Mammary epithelial cell (primary cell): ENCODE measurements at regions of chr16 and their contacts with region 1.

Region 1: DNA sequence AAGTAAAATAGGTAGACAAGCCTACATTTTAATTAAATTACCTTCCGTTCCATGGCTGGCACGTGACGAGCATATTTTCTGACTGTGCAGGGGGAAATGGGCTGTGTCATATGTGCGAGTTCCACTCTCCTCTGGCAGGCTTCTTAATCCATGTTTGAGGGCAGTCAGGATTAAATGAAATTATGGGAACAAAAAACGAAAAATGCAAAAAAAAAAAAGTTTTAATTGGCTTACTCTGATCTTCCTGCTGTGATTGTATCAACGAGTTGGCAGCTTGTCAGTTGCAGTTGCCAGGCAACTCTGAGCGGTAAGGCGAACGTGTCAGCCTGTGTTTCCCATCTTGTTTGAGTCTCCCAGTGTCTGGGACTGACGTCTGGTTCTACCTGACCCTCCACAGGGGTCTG is 302.9 kb upstream of the XYLT1 start:
- DNase-seq: no peak
- H3K4me3 ChIP-seq: no peak overlapping the region
- H3K27ac ChIP-seq: no peak overlapping the region
- H3K4me1 ChIP-seq: no peaks in the 10 kb centered on the region
- H3K27me3 ChIP-seq: no peaks in the 10 kb centered on the region
- CTCF ChIP-seq: no peak

Region 2: GRCh38 chr16:17744903-17745575 is 28.7 kb before region 1 on chr16:
- CTCF ChIA-PET with region 1: interaction called, 46 read pairs
- dilution Hi-C with region 1: no loop called
- in situ Hi-C with region 1: no loop called
- intact Hi-C with region 1: no loop called
- DNase-seq: no peak
- H3K4me3 ChIP-seq: no peak overlapping the region
- H3K27ac ChIP-seq: no peak overlapping the region
- H3K4me1 ChIP-seq: no peaks in the 10 kb centered on the region
- H3K27me3 ChIP-seq: no peaks in the 10 kb centered on the region
- CTCF ChIP-seq: no peak

Region 3: DNA sequence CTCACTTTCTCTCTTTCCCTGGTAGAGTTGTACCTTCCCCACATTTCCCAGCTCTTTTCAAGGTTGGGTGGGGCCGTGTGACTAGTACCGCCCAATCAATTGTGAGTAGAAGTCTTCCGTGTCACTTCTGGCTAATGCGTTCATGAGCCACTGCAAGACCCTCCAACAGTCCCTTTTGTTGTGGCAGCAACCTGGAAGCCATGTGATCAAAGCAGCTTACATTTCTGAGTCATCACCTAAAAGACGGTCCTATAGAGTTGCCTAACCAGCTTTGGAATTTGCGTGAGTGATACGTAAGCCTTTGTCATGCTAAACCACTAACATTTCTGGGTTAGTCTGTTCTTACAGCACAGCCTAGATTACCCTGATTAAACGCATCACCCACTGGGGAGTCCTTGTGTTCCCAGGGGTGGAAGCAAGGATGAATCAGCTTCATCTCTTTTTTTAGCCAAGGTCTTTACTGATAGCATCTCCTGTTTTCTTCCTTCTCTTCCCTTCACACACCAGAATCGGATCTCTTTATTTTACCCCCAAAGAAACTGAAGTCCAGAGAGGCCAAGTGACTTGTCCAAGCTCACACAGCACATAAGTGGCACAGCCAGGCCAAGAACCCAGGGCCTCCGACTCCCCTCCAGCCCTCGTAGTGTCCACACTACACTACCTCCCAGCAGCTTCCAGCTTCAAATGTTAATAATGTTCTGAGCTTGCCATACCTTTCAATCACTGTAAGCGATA is 63.3 kb after region 1 on chr16:
- CTCF ChIA-PET with region 1: no interaction called
- dilution Hi-C with region 1: no loop called
- in situ Hi-C with region 1: no loop called
- intact Hi-C with region 1: loop called (anchors 5 kb)
- DNase-seq: peak; percentile 93
- H3K4me3 ChIP-seq: no peak overlapping the region
- H3K27ac ChIP-seq: no peak overlapping the region
- H3K4me1 ChIP-seq: no peaks in the 10 kb centered on the region
- H3K27me3 ChIP-seq: no peaks in the 10 kb centered on the region
- CTCF ChIP-seq: no peak

Region 4: GRCh38 chr16:17901309-17901708 is 127.6 kb after region 1 on chr16:
- CTCF ChIA-PET with region 1: no interaction called
- dilution Hi-C with region 1: no loop called
- in situ Hi-C with region 1: no loop called
- intact Hi-C with region 1: no loop called
- DNase-seq: no peak
- H3K4me3 ChIP-seq: no peak overlapping the region
- H3K27ac ChIP-seq: no peak overlapping the region
- H3K4me1 ChIP-seq: no peaks in the 10 kb centered on the region
- H3K27me3 ChIP-seq: no peaks in the 10 kb centered on the region
- CTCF ChIP-seq: no peak